Endothelial cell of umbilical vein (primary cell): ENCODE measurements at regions of chrX and their contacts with region 1.

Region 1: DNA sequence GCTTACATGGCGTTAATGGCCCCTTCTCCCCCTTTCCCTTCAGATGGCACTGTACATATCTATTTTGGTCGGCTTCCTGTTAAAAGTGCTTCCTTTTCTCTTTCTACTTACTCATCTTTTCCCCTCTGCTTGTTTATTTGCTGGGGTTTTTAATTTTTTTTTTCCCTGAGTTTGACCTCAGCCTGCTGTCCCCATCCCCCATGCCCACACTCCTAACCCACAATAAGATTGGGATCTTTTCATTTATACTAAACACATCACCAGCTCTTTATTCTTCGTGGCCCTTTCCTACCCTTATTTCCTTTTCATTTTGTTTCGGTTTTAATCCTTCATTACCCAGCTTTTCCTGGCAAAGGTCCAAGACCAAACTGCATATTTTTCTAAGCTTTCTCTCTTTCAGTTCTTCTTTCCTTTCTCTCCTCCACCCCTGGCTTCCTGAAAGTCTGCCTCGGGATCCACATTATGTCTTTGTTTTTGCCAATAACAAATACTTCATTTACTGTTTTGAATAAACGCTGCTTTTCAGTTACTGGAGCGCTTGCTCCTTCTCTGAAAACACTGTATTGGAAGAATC is 152.0 kb upstream of the USP9X start:
- DNase-seq: peak; percentile 82
- H3K4me3 ChIP-seq: peak overlapping the region in 2 of 3 experiments; percentile 8 to 43
- H3K27ac ChIP-seq: peak overlapping the region; percentile 75
- H3K4me1 ChIP-seq: peaks cover 13% of the 10 kb centered on the region
- H3K27me3 ChIP-seq: no peaks in the 10 kb centered on the region
- CTCF ChIP-seq: no peak
- POLR2A ChIP-seq: no peak

Region 2: DNA sequence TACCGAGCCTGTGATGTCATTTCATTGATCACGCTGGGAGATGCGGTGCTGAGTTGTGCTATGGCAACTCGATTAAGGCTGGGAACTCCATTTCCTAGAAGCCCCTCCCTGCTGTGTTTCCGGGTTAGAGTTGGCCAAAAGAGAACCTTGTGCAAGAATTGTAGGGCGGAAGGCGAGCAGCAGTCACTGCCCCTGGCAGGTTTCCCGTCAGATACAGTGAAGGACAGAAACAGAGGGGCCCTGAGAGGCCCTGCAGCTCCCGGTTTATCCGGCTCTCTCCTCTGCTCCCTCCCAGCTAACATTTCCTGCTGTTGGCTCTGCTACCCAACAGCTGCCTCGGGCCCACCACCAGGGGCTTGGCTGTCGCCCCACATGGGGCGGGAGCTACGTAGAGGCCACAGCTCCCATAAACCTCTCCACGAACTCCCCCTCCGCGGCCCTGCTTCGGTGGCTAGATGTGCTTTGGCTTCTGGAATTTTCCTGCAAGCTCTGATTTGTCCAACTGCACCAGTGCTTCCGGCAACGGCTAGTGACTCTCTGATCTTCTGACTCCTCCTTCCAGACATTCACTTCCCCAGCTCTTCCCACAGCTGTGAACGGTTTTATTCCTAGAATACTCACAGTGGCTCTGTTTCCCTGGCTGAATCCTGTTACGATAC is 77.1 kb after region 1 on chrX:
- CTCF ChIA-PET with region 1: no interaction called
- POLR2A ChIA-PET with region 1: no interaction called
- dilution Hi-C with region 1: no loop called
- intact Hi-C with region 1: loop called (anchors 5 kb)
- DNase-seq: peak; percentile 91
- H3K4me3 ChIP-seq: no peak overlapping the region
- H3K27ac ChIP-seq: peak overlapping the region; percentile 81
- H3K4me1 ChIP-seq: peaks cover 20% of the 10 kb centered on the region
- H3K27me3 ChIP-seq: no peaks in the 10 kb centered on the region
- CTCF ChIP-seq: peak in 1 of 2 donors; percentile 44
- POLR2A ChIP-seq: peak; percentile 40

Region 3: DNA sequence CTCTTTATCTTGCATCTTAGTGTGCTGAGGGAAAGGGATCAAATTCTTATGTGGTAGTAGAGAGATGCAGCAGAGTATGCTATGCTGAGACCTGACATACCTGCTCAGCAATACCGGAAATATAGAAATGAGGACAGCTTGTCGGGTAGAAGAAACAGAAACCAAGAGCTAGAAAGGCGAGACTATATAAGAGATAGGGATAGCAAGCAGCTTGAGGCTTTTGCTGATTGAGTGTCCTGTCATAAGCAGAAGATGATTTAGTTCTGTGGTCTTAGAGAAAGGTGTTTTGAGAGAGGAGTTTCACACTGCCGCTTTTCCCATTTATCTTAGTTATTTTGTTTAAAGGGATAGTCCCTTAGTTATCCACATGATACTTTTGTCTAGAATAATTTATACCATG is 183.7 kb after region 1 on chrX:
- CTCF ChIA-PET with region 1: interaction called, 7 read pairs
- POLR2A ChIA-PET with region 1: no interaction called
- dilution Hi-C with region 1: no loop called
- intact Hi-C with region 1: loop called (anchors 5 kb)
- DNase-seq: no peak
- H3K4me3 ChIP-seq: no peak overlapping the region
- H3K27ac ChIP-seq: no peak overlapping the region
- H3K4me1 ChIP-seq: peaks cover 4% of the 10 kb centered on the region
- H3K27me3 ChIP-seq: no peaks in the 10 kb centered on the region
- CTCF ChIP-seq: no peak
- POLR2A ChIP-seq: no peak